Gastrocnemius medialis (tissue), 4 donors: ENCODE measurements at regions of chr3 and their contacts with region 1.

Region 1: DNA sequence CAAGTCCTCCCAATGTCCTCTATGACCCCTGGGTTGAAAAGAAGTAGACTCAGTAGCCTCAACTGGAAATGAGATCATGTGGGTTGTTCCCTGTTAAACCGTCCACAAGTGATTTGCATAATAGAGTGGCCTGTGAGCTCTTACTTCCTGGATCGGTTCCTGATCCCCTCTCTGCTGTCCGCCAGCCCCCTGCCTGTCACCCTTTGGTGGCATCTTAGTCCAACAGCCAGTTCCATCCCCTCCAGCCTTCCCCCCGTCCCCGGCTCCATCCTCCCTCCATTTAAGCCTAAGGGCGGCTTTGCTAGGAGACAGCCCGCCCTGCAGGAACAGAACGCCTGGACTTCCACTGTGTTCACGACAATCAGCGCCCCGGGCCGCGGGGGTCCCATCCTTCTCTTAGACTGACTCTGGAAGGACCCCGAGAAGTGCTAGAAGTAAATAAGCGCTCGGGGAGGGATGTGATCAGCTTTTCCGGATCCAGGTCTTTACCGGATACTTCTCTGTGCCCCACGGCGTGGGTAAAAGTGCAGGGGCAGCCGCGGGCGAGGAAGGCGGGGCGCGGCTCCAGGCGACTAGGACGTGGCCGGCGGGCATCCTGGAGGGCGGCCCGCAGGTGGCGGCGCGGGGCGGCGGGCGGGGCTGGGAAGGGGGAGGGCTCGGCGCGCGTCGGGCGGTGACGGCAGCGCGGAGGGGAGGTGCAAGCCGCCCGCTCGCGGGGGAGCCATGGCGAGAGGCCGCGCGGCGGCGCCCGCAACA is 51.2 kb upstream of the ULK4 start:
- DNase-seq: peak; percentile 54 to 62
- ATAC-seq: peak; percentile 77 to 86
- H3K4me3 ChIP-seq: peak overlapping the region; percentile 51 to 72 (median 67)
- H3K27ac ChIP-seq: peak overlapping the region; percentile 76 to 91 (median 86)
- H3K4me1 ChIP-seq: peaks cover 18 to 22% of the 10 kb centered on the region in 2 donors
- H3K27me3 ChIP-seq: no peaks in the 10 kb centered on the region
- CTCF ChIP-seq: peak in 2 of 5 experiments; percentile 12 to 47
- POLR2A ChIP-seq: peak; percentile 45 to 62

Region 2: GRCh38 chr3:41893977-41894376 is 119.1 kb before region 1 on chr3:
- in situ Hi-C with region 1: no loop called
- intact Hi-C with region 1: loop called (anchors 10 kb)
- DNase-seq: no peak
- ATAC-seq: no peak
- H3K4me3 ChIP-seq: no peak overlapping the region
- H3K27ac ChIP-seq: no peak overlapping the region
- H3K4me1 ChIP-seq: no peaks in the 10 kb centered on the region
- H3K27me3 ChIP-seq: no peaks in the 10 kb centered on the region
- CTCF ChIP-seq: peak; percentile 44 to 67 (median 45)
- POLR2A ChIP-seq: no peak

Region 3: DNA sequence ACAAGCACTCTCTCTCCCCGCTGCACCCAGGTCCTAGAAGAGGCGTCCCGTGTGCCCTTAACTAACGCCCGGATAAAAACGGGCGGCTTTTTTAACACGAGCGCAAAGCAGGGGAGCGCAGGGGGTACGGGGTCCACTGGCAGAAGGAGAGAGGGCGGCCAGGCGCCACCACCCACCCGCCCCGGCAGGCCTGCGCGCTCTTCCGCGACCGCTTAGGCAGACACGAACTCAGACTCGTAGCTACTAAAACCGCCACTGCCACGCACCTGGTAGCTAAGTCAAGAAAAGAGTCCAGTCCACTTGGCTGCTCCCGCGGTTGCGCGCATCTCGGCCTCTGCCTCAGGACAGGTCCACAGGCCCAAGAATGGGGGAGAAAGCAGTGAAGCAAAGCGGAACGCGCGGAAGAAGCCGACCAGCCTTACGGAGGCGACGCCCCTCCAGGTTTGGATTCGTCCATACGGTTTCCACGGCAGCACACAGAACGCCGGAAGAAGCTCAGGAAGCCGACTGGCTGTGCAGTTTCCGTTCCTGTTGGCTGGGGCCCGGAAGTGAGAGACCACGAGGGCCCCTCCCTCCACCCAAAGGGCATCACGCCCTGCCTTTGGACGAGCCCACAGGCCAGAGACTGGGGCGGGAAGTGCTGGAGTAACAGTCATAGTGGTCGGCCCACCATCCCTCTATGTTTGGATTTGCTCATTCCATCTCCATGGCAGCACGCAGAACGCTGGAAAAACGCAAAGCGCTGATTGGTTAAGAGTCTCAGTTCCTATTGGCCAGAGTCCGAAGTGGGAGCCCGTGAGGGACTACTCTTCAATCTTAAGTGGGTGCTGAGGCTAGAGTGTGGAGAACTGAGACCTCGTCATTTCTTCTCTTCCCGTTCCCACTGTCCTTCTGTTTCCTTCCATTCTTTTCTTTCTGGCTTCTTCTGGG is 51.1 kb before region 1 on chr3 and contains the start of gene ULK4:
- in situ Hi-C with region 1: no loop called
- intact Hi-C with region 1: loop called (anchors 1 kb)
- DNase-seq: peak; percentile 96
- ATAC-seq: peak; percentile 98 to 99
- H3K4me3 ChIP-seq: peak within 1 kb of the TSS; percentile 71 to 95 (median 84)
- H3K27ac ChIP-seq: peak within 1 kb of the TSS; percentile 49 to 79 (median 74)
- H3K4me1 ChIP-seq: peaks cover 0 to 9% of the 10 kb centered on the region in 2 donors
- H3K27me3 ChIP-seq: no peaks in the 10 kb centered on the region
- CTCF ChIP-seq: no peak
- POLR2A ChIP-seq: peak in 1 of 2 donors; percentile 14
- total RNA-seq, gene ULK4: 2.0 to 3.0 (median 2.3) TPM

Region 4: DNA sequence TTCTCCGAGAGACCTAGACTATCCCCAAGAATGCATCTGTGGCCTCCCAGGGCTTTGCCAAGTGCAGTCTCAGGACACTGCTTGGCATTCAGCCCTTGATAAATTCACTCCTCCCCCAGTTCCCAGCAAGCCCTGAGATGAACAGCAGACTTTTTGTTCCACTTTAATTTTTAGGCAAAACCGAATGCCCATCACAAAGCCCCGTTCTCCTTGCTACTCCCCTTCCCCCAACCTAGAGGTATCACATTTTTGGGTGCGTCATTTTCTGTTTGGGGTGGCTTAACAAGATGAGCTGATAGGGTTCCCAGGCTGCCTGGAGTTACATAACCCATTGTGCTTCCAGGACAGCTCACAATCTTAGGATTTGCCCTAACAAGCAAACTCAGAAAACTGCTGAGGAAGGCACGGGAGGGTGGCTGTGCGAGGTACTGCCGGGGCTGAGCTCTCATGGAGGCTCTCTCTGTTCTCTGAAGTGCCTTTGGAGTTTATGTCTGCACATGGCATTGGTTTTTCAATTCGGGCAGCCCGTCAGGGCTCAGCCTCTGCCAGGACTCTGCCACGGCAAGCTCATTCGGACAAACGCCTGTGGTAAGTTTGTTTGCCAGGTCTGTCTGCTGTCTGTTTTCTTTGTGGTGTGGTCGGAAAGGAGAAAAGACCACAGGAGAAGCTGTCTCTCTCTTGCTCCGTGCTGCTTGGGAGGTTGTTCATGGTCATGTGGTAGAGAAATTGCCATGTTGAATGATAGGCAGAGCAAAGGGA is 78.0 kb after region 1 on chr3 and contains the start of gene TRAK1:
- in situ Hi-C with region 1: loop called in 3 of 4 experiments (anchors 5 to 10 kb)
- intact Hi-C with region 1: no loop called
- DNase-seq: peak; percentile 39 to 53
- ATAC-seq: peak; percentile 76 to 77
- H3K4me3 ChIP-seq: peak within 1 kb of the TSS; percentile 33 to 43 (median 38)
- H3K27ac ChIP-seq: peak within 1 kb of the TSS; percentile 80 to 86 (median 84)
- H3K4me1 ChIP-seq: peaks cover 29 to 37% of the 10 kb centered on the region in 2 donors
- H3K27me3 ChIP-seq: no peaks in the 10 kb centered on the region
- CTCF ChIP-seq: no peak
- POLR2A ChIP-seq: no peak
- total RNA-seq, gene TRAK1: 59.5 to 109 (median 98.6) TPM

Region 5: DNA sequence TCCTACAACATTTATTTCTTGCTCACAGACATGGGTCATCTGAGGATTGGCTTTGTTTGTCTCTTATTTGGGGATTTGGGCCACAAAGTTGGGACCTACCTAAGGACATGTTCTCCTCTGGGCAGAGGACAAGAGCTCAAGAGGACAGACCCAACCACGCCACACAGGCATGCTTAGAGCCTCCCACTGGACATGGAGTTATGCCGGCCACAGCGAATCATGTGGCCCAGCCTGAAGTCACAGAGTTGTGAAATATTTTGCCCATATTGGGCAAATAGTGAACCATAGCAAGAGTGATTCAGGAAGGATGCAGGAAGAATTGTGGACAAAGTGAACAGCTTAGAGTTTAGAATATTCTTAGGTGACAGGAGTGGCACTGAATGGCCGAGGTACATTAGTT is 87.9 kb after region 1 on chr3:
- in situ Hi-C with region 1: loop called in 2 of 4 experiments (anchors 5 to 10 kb)
- intact Hi-C with region 1: loop called (anchors 1 kb)
- DNase-seq: peak; percentile 37 to 70
- ATAC-seq: peak; percentile 62 to 75
- H3K4me3 ChIP-seq: no peak overlapping the region
- H3K27ac ChIP-seq: peak overlapping the region; percentile 62 to 76 (median 72)
- H3K4me1 ChIP-seq: peaks cover 52 to 62% of the 10 kb centered on the region in 2 donors
- H3K27me3 ChIP-seq: no peaks in the 10 kb centered on the region
- CTCF ChIP-seq: no peak
- POLR2A ChIP-seq: no peak

Region 6: GRCh38 chr3:42190701-42191462 is 177.8 kb after region 1 on chr3:
- in situ Hi-C with region 1: loop called in 2 of 4 experiments (anchors 25 kb)
- intact Hi-C with region 1: no loop called
- DNase-seq: peak; percentile 50 to 57
- ATAC-seq: peak; percentile 70 to 81
- H3K4me3 ChIP-seq: no peak overlapping the region
- H3K27ac ChIP-seq: peak overlapping the region; percentile 25 to 56 (median 39)
- H3K4me1 ChIP-seq: peaks cover 17 to 29% of the 10 kb centered on the region in 2 donors
- H3K27me3 ChIP-seq: no peaks in the 10 kb centered on the region
- CTCF ChIP-seq: peak; percentile 77 to 91 (median 88)
- POLR2A ChIP-seq: no peak

Region 7: DNA sequence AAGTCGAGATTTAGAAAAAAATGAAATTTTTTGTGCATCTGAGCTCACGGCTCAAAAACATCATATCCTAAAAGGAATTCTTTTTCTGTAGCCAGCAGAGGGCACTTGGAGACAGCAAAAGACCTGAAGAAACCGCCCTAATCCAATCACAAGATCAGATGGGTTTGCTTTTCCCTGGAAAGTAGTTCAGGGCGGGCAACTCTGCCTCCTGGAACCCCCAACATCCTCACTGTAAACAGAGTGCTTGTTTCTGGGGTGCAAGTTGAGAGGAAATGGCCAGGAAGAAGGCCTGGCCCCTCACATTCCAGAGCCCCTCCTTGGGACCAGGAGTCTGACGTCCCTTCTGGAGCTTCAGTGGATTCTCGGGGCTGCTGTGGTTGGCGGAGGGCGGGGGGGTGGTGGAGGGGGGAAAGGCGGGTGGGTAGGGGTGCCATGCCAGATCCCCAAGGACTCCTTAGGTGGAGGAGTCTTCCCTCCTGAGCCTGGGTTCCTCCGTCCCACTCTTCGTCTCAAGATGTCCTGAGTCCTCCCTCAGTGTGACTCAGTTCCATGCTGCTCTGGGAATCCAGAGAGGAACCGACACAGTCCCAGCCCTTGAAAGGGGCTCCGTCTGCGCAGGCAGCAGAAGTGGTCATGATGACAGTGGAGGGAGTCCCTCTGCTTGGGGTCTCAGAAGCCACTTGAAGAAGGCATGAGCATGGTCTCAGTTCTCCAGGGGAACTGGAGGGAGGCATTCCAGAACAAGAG is 217.0 kb after region 1 on chr3:
- in situ Hi-C with region 1: no loop called
- intact Hi-C with region 1: loop called (anchors 10 kb)
- DNase-seq: no peak
- ATAC-seq: no peak
- H3K4me3 ChIP-seq: no peak overlapping the region
- H3K27ac ChIP-seq: no peak overlapping the region
- H3K4me1 ChIP-seq: peaks cover 18 to 20% of the 10 kb centered on the region in 2 donors
- H3K27me3 ChIP-seq: no peaks in the 10 kb centered on the region
- CTCF ChIP-seq: peak; percentile 38 to 61 (median 58)
- POLR2A ChIP-seq: no peak